Naive thymus-derived CD4-positive, alpha-beta T cell (primary cell): ENCODE measurements at regions of chr17 and their contacts with region 1.

Region 1: DNA sequence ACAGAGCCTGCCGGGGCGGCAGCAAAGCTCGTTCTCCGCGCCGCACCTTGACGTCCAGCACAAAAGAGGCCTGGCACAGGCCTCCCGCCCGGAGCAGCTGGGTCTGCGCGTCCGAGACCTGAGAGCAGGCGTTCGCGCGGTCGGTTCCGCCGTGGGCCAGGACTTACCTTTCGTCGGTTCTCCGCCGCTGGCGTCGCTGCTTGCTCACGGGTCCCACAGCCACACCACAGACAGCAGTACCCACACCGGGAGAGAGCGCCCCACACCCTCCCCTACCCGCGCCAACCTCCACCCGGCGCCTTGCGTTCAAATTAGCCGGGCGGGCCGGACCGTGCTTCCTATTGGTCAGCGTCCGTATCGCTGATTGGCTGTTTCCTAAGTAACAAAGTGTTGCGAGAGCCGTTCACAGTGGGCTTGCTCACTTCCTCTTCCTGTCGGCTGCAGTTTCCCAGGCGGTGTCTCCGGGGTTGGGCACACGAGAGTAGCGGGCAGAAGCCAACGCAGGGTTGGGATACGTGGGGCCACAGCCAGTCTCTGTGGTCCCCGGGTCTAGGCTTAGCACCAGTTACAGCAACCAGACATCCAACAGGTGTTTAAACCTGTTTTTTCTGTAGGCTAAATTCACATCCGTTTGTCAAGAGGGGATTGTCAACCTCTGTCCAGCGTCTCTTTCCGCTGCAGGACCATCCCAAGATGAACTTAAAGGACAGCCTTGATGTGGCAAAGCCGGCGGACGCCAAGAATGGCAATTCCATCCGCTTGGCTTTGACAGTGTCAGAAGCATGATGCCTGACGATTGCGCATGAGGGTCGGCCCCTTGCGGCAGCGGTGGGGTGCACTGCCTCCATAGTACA is at the start of gene KIF18B:
- DNase-seq: peak; percentile 73 to 91 (median 86)
- ATAC-seq: peak; percentile 99
- H3K4me3 ChIP-seq: peak within 1 kb of the TSS; percentile 83
- H3K4me3 Mint-ChIP-seq: peak within 1 kb of the TSS; percentile 85 to 98 (median 93)
- H3K27ac ChIP-seq: peak within 1 kb of the TSS; percentile 69
- H3K27ac Mint-ChIP-seq: peak within 1 kb of the TSS; percentile 86 to 98 (median 93)
- H3K4me1 ChIP-seq: peaks cover 5 to 6% of the 10 kb centered on the region in 2 donors
- H3K4me1 Mint-ChIP-seq: peaks cover 0 to 40% (median 5%) of the 10 kb centered on the region in 7 donors
- H3K27me3 ChIP-seq: no peaks in the 10 kb centered on the region
- H3K27me3 Mint-ChIP-seq: peaks cover 0 to 7% (median 0%) of the 10 kb centered on the region in 5 donors
- total RNA-seq, gene KIF18B: 0.17 to 57.2 TPM in 2 of 5 experiments, not detected in the others

Region 2: DNA sequence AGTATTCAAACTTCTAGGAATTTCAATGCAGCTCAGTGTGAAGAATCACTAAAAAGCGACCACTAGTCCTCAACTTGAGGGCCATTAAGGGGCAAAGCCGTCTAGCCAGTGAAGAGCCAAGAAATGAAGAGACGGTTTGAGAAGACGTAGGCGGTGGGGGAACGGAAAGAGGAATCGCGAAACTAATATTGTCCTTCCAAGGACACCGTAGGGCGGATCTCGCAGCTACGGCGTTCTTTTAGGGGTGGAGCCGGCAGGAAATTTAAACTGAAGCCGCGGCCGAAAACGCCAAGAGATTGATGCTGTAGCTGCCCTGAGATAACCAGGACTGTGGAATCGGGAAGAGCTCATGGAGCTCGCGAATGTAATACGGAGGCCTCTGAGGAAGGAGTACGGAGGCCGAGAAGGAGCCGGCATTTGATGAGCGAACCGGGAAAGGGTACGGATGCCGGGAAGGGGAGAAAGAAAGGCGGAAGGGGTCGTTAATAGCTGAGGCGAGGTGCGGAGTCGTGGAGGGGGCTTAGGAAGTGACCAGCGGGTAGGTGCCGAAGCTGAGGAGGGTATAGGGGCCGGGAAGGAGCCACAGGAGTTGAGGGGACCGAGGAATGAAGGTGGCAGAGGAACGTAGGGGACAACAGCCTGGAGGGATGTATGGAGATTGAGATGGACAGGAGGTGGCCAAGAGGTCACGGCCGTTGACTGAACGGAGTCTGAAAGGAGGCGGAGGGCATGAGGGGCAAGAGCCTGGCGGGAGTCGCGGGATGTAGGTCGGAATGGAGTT is 239.1 kb before region 1 on chr17 and contains the start of gene DBF4B:
- CTCF ChIA-PET with region 1: no interaction called
- POLR2A ChIA-PET with region 1: no interaction called
- intact Hi-C with region 1: no loop called
- DNase-seq: peak; percentile 49 to 92 (median 86)
- ATAC-seq: peak; percentile 99
- H3K4me3 ChIP-seq: peak within 1 kb of the TSS; percentile 91
- H3K4me3 Mint-ChIP-seq: peak within 1 kb of the TSS in 1 of 10 donors; percentile 79
- H3K27ac ChIP-seq: peak within 1 kb of the TSS; percentile 62
- H3K27ac Mint-ChIP-seq: peak within 1 kb of the TSS in 1 of 9 donors; percentile 72
- H3K4me1 ChIP-seq: peaks cover 14 to 15% of the 10 kb centered on the region in 2 donors
- H3K4me1 Mint-ChIP-seq: peaks cover 0 to 7% (median 4%) of the 10 kb centered on the region in 7 donors
- H3K27me3 ChIP-seq: no peaks in the 10 kb centered on the region
- H3K27me3 Mint-ChIP-seq: peaks cover 0 to 9% (median 4%) of the 10 kb centered on the region in 5 donors
- total RNA-seq, gene DBF4B: 2.8 to 23.1 (median 7.8) TPM

Region 3: DNA sequence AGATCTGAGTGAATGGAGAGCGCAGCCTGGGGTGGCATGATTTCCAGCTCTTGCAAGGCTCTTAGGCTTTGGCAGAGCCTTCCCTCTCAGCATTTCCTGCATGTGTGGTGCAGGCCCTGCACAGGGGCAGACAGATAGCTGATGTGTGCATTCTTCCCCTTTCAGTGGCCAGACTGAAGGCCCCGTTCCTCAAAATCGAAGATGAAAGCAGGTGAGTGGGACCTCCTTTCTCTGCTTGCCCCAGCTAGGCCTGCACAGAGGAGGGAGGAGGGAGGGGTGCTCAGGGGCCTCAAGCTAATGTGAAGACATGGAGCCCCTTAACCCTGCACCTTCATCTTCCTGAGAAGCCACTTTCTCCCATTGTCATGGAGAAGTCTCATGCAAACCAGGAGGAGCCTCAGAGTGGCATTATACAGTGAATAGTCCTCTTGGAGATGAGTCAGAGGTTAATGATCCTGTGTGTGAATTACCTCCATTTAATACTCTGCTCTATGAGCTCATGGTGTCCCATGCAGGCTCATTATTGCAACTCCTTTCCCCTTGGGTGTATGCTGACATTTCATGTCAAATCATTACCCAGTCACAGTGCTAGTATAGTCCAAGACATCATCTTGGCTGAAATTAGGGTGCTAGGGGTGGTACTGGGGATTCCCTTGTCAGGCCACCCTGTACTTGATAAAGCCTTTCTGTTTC is 209.3 kb before region 1 on chr17:
- CTCF ChIA-PET with region 1: no interaction called
- POLR2A ChIA-PET with region 1: no interaction called
- intact Hi-C with region 1: no loop called
- DNase-seq: no peak
- ATAC-seq: no peak
- H3K4me3 ChIP-seq: no peak overlapping the region
- H3K4me3 Mint-ChIP-seq: no peak overlapping the region
- H3K27ac ChIP-seq: no peak overlapping the region
- H3K27ac Mint-ChIP-seq: no peak overlapping the region
- H3K4me1 ChIP-seq: no peaks in the 10 kb centered on the region
- H3K4me1 Mint-ChIP-seq: no peaks in the 10 kb centered on the region
- H3K27me3 ChIP-seq: no peaks in the 10 kb centered on the region
- H3K27me3 Mint-ChIP-seq: no peaks in the 10 kb centered on the region

Region 4: DNA sequence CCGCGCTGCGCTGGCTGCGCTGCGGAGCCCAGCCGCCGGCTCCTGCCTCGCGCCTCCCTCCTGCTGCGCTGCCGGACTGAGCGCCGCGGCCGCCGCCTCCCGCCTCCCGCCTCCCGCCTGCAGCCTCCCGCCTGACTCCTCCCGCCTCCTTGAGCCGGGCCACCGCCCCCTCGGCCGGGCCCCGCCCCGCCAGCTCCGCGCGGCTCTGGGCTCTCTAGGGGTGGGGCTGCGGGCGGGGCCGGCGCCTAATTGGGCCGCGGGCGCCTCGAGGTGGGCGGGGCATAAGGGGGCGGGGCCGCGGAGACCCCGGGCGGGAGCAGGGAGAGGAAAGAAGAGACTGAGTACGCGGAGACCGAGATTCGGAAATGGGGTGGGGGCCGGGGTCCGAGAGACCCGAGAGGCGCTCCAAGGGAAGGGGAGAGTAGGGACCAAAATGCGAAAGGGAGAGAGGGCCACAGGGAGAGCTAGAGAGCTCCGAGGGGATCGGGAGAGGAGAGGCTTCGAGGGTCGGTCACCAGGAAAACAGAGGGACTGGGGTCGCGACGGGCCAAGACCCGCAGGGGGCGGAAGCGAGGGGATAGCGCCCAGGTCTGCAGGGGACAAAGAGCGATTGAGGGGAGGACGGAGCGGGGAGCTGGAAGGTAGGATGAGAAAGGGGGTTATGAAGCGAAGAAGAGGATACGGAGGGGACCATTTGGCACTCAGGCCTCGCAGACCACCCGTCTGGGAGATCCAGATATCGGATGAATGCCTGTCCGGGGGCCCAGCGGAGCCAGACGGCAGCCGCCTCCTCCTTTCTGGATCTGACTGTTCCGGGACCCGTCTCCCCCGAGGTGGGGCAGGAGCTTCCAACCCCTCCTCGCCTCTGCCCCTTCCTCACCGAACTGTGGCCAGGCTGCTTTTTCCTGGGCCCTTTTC is 20.8 kb after region 1 on chr17 and contains the start of gene C1QL1:
- CTCF ChIA-PET with region 1: no interaction called
- POLR2A ChIA-PET with region 1: no interaction called
- intact Hi-C with region 1: loop called (anchors 1 kb)
- DNase-seq: peak; percentile 58 to 93 (median 69)
- ATAC-seq: peak; percentile 99
- H3K4me3 ChIP-seq: peak within 1 kb of the TSS; percentile 33
- H3K4me3 Mint-ChIP-seq: peak within 1 kb of the TSS; percentile 64 to 87 (median 78)
- H3K27ac ChIP-seq: no peak within 1 kb of the TSS
- H3K27ac Mint-ChIP-seq: peak within 1 kb of the TSS in 2 of 9 donors; percentile 16 to 55
- H3K4me1 ChIP-seq: peaks cover 19 to 24% of the 10 kb centered on the region in 2 donors
- H3K4me1 Mint-ChIP-seq: peaks cover 23 to 40% (median 29%) of the 10 kb centered on the region in 7 donors
- H3K27me3 ChIP-seq: peaks cover 14 to 21% of the 10 kb centered on the region in 2 donors
- H3K27me3 Mint-ChIP-seq: peaks cover 30 to 84% (median 45%) of the 10 kb centered on the region in 5 donors
- total RNA-seq, gene C1QL1: 0.29 TPM in 1 of 5 experiments, not detected in the others